Sciatic nerve (tissue), 2 donors: ENCODE measurements at regions of chr17 and their contacts with region 1.

Region 1: GRCh38 chr17:19737305-19738045 is 10.6 kb downstream of the ALDH3A1 start:
- DNase-seq: no peak
- ATAC-seq: no peak

Region 2: DNA sequence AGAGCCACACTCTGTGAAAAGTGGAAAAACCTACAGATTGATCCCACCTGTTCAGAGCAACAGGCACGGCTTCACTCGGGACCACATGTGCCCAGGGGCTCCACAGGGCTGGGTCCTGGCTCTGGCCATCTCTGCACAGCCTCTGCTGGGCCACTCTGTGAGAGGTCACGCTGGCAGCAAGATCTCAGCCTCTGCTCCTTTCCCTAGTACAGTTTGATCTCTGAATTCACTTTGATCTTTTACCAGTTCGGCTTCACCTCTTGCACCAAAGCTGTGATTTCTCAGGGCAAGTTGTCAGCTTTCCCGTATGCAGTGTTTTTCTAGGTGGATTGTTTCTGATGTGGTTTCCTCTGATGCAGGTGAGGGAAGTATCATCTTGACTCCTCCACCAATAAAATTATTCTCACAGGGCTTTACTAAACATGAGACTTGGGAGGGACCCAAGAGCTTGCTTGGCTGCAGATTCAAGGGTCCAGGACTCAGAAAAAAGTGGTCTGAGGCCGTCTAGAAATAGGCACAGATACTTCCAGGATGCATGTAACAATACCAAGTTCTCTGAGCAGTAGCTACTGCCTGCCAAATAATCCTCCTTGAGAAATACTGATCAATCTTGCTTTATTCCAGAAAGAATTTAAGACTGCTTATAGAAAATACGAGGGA is 34.6 kb after region 1 on chr17:
- intact Hi-C with region 1: loop called (anchors 1 kb)
- DNase-seq: no peak
- ATAC-seq: peak; percentile 53